ENCODE measurements at regions of chr4 and their contacts with region 1.

Region 1: DNA sequence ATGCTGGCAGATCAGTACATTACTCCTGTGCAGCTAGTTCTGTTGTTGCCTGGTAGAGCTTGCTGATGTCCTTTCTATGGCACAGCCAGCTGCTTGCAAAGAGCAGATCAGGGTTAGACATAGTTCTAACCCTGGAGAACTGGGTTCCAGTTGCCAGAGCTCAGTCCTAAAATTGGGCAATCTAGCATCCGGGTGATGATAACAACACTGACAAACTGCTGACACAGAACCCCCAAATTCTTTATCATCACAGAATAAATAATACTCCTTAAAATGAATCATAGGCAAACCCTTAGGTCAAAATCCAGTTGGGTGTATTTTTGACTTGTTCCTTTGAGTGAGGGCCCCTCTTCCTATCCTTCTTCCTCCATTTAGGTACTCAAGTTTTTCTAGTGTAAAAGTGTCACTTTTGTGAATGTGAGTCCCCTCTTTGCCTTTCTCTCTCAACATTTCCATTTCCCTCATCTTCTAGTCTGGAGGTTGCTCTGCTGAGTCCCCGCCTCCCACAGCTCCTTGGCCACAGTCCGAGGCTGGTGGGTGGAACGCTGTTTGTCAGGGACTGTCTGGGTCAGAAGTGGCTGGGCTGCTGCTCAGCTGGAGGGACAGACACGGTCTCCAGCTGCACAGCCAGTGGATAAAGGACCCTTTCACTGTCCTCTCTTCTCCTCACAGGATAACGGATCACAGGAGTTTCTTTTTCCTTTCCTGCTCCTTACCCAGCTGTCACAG is 93.6 kb upstream of the RASGEF1B start:
- DNase-seq: no peak
- ATAC-seq: no peak
- H3K4me3 ChIP-seq: peak overlapping the region in 2 of 5 experiments; percentile 5 to 6
- H3K4me3 Mint-ChIP-seq: peak overlapping the region; percentile 61
- H3K27ac ChIP-seq: peak overlapping the region; percentile 4 to 21
- H3K27ac Mint-ChIP-seq: peak overlapping the region; percentile 64
- H3K4me1 ChIP-seq: peaks cover 54 to 65% of the 10 kb centered on the region in 2 donors
- H3K4me1 Mint-ChIP-seq: peaks cover 59% of the 10 kb centered on the region
- H3K27me3 ChIP-seq: no peaks in the 10 kb centered on the region
- H3K27me3 Mint-ChIP-seq: no peaks in the 10 kb centered on the region
- CTCF ChIP-seq: no peak

Region 2: DNA sequence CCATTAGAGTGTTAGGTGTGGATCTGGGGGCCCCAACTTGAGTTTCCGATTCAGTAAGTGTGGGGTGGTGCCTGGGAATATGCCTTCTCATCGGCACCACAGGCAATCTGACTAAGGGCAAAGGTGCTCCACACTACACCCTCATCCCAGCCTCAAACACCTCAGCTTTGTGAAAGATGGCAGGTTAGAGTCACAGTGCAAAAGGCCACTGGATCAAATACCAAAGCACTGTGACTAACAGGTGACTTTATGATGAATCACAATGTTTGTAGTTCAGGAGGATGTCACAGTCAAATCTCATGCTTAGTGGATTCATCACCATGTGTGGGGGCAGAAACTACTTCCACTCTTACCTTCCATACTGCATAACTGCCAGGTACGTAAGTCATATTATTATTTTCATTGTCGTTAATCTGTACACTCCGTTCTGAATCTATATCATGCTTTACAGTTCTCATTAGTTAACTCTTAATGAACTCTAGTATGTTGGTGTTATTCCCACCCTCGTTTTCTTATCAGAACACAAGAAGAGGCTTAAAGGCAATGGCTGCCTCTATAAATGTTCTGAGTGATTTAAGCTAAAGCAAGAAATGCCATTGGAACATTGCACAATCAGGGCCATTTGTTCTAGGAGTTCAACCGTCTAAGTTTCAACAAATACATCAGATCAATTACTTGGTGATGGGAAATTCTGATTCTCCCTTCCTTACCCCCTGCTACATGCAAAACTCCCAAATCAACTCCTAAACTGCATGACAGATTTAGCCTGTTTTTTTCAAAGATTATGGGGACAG is 400.5 kb before region 1 on chr4:
- CTCF ChIA-PET with region 1: no interaction called
- POLR2A ChIA-PET with region 1: no interaction called
- intact Hi-C with region 1: no loop called
- DNase-seq: no peak
- ATAC-seq: no peak
- H3K4me3 ChIP-seq: no peak overlapping the region
- H3K4me3 Mint-ChIP-seq: no peak overlapping the region
- H3K27ac ChIP-seq: no peak overlapping the region
- H3K27ac Mint-ChIP-seq: no peak overlapping the region
- H3K4me1 ChIP-seq: no peaks in the 10 kb centered on the region
- H3K4me1 Mint-ChIP-seq: no peaks in the 10 kb centered on the region
- H3K27me3 ChIP-seq: no peaks in the 10 kb centered on the region
- H3K27me3 Mint-ChIP-seq: no peaks in the 10 kb centered on the region
- CTCF ChIP-seq: no peak

Region 3: DNA sequence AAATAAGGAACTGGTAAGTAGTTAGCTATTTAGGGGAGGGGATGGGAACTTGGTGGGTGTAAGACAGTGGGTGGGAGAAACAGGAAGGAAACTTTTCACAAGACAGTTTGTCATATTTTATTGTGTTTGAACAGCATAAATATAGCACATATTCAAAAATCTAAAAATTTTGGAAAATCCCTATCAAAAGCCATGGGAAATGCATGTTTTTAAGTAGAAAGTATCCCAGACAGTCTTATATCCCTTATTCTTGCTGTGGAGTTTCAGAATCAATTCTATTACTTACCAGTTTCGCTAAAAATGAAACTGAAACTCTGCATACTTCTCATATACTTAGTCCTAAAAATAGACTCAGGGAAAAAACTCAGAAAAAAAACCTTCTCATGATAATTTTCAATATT is 71.3 kb before region 1 on chr4:
- CTCF ChIA-PET with region 1: no interaction called
- POLR2A ChIA-PET with region 1: interaction called, 3 read pairs
- intact Hi-C with region 1: loop called (anchors 1 kb)
- DNase-seq: peak; percentile 76
- ATAC-seq: peak; percentile 37
- H3K4me3 ChIP-seq: peak overlapping the region in 2 of 5 experiments; percentile 1 to 50
- H3K4me3 Mint-ChIP-seq: peak overlapping the region; percentile 76
- H3K27ac ChIP-seq: peak overlapping the region; percentile 59 to 80
- H3K27ac Mint-ChIP-seq: peak overlapping the region; percentile 85
- H3K4me1 ChIP-seq: peaks cover 43 to 54% of the 10 kb centered on the region in 2 donors
- H3K4me1 Mint-ChIP-seq: peaks cover 49% of the 10 kb centered on the region
- H3K27me3 ChIP-seq: no peaks in the 10 kb centered on the region
- H3K27me3 Mint-ChIP-seq: no peaks in the 10 kb centered on the region
- CTCF ChIP-seq: no peak

Region 4: DNA sequence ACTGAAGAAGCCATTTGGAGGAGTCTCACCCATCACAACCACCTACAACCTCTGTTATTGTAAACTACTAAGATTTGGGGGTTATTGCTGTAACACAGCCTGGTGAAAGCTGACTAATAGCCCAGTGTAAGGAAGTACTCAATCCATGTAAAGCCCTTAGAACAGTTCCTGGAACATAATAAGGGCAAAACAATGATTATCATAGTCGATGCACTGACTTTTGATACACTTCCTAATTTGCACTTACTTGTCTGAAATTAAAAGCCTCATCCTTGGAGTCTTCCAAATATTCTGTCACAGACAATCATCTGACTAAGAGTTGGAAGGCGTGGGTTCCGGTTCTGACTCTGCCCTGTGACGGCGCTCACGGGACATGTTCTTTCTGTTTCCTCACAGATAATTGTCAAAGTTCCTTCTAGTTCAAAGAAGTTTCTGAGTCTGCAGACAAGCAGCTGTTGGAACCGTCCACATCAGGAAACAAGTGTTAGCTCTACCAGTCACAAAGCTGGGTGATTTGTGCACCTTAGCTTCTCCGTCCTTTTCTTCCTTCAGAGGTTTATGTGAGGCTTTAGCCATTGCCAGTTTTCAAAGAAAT is 60.2 kb before region 1 on chr4:
- CTCF ChIA-PET with region 1: interaction called, 5 read pairs
- POLR2A ChIA-PET with region 1: interaction called, 4 read pairs
- intact Hi-C with region 1: loop called (anchors 2 kb)
- DNase-seq: peak; percentile 85
- ATAC-seq: peak; percentile 69
- H3K4me3 ChIP-seq: peak overlapping the region in 3 of 5 experiments; percentile 6 to 33 (median 28)
- H3K4me3 Mint-ChIP-seq: peak overlapping the region; percentile 81
- H3K27ac ChIP-seq: peak overlapping the region; percentile 56 to 81
- H3K27ac Mint-ChIP-seq: peak overlapping the region; percentile 88
- H3K4me1 ChIP-seq: peaks cover 45 to 58% of the 10 kb centered on the region in 2 donors
- H3K4me1 Mint-ChIP-seq: peaks cover 70% of the 10 kb centered on the region
- H3K27me3 ChIP-seq: no peaks in the 10 kb centered on the region
- H3K27me3 Mint-ChIP-seq: no peaks in the 10 kb centered on the region
- CTCF ChIP-seq: no peak

Region 5: GRCh38 chr4:81512757-81513501 is 52.4 kb before region 1 on chr4:
- CTCF ChIA-PET with region 1: interaction called, 7 read pairs
- POLR2A ChIA-PET with region 1: interaction called, 4 read pairs
- intact Hi-C with region 1: loop called (anchors 1 kb)
- DNase-seq: peak; percentile 66
- ATAC-seq: peak; percentile 70
- H3K4me3 ChIP-seq: no peak overlapping the region
- H3K4me3 Mint-ChIP-seq: peak overlapping the region; percentile 40
- H3K27ac ChIP-seq: peak overlapping the region; percentile 65 to 78
- H3K27ac Mint-ChIP-seq: peak overlapping the region; percentile 56
- H3K4me1 ChIP-seq: peaks cover 34 to 59% of the 10 kb centered on the region in 2 donors
- H3K4me1 Mint-ChIP-seq: peaks cover 65% of the 10 kb centered on the region
- H3K27me3 ChIP-seq: no peaks in the 10 kb centered on the region
- H3K27me3 Mint-ChIP-seq: no peaks in the 10 kb centered on the region
- CTCF ChIP-seq: no peak

Region 6: GRCh38 chr4:81528979-81529378 is 36.3 kb before region 1 on chr4:
- CTCF ChIA-PET with region 1: no interaction called
- POLR2A ChIA-PET with region 1: no interaction called
- intact Hi-C with region 1: no loop called
- DNase-seq: no peak
- ATAC-seq: no peak
- H3K4me3 ChIP-seq: no peak overlapping the region
- H3K4me3 Mint-ChIP-seq: no peak overlapping the region
- H3K27ac ChIP-seq: no peak overlapping the region
- H3K27ac Mint-ChIP-seq: no peak overlapping the region
- H3K4me1 ChIP-seq: peaks cover 0 to 2% of the 10 kb centered on the region in 2 donors
- H3K4me1 Mint-ChIP-seq: peaks cover 11% of the 10 kb centered on the region
- H3K27me3 ChIP-seq: no peaks in the 10 kb centered on the region
- H3K27me3 Mint-ChIP-seq: no peaks in the 10 kb centered on the region
- CTCF ChIP-seq: no peak

Region 7: GRCh38 chr4:81589262-81589661 is 24.0 kb after region 1 on chr4:
- CTCF ChIA-PET with region 1: no interaction called
- POLR2A ChIA-PET with region 1: no interaction called
- intact Hi-C with region 1: no loop called
- DNase-seq: no peak
- ATAC-seq: no peak
- H3K4me3 ChIP-seq: no peak overlapping the region
- H3K4me3 Mint-ChIP-seq: no peak overlapping the region
- H3K27ac ChIP-seq: no peak overlapping the region
- H3K27ac Mint-ChIP-seq: no peak overlapping the region
- H3K4me1 ChIP-seq: peaks cover 3 to 10% of the 10 kb centered on the region in 2 donors
- H3K4me1 Mint-ChIP-seq: peaks cover 36% of the 10 kb centered on the region
- H3K27me3 ChIP-seq: no peaks in the 10 kb centered on the region
- H3K27me3 Mint-ChIP-seq: no peaks in the 10 kb centered on the region
- CTCF ChIP-seq: no peak

Region 8: GRCh38 chr4:81635739-81636138 is 70.4 kb after region 1 on chr4:
- CTCF ChIA-PET with region 1: interaction called, 4 read pairs
- POLR2A ChIA-PET with region 1: interaction called, 4 read pairs
- intact Hi-C with region 1: loop called (anchors 1 kb)
- DNase-seq: peak; percentile 87
- ATAC-seq: peak; percentile 76
- H3K4me3 ChIP-seq: peak overlapping the region in 2 of 5 experiments; percentile 4 to 13
- H3K4me3 Mint-ChIP-seq: peak overlapping the region; percentile 83
- H3K27ac ChIP-seq: peak overlapping the region; percentile 17 to 51
- H3K27ac Mint-ChIP-seq: peak overlapping the region; percentile 91
- H3K4me1 ChIP-seq: peaks cover 33 to 34% of the 10 kb centered on the region in 2 donors
- H3K4me1 Mint-ChIP-seq: peaks cover 55% of the 10 kb centered on the region
- H3K27me3 ChIP-seq: no peaks in the 10 kb centered on the region
- H3K27me3 Mint-ChIP-seq: no peaks in the 10 kb centered on the region
- CTCF ChIP-seq: no peak